AG04449 (cell line): ENCODE measurements at regions of chr1 and their contacts with region 1.

Region 1: GRCh38 chr1:67500413-67500959 is 70.3 kb upstream of the SERBP1 start:
- DNase-seq: no peak
- H3K4me3 ChIP-seq: no peak overlapping the region
- CTCF ChIP-seq: peak; percentile 99

Region 2: GRCh38 chr1:67227196-67227595 is 273.3 kb before region 1 on chr1:
- CTCF ChIA-PET with region 1: interaction called, 10 read pairs
- POLR2A ChIA-PET with region 1: no interaction called
- DNase-seq: no peak
- H3K4me3 ChIP-seq: no peak overlapping the region
- CTCF ChIP-seq: no peak

Region 3: DNA sequence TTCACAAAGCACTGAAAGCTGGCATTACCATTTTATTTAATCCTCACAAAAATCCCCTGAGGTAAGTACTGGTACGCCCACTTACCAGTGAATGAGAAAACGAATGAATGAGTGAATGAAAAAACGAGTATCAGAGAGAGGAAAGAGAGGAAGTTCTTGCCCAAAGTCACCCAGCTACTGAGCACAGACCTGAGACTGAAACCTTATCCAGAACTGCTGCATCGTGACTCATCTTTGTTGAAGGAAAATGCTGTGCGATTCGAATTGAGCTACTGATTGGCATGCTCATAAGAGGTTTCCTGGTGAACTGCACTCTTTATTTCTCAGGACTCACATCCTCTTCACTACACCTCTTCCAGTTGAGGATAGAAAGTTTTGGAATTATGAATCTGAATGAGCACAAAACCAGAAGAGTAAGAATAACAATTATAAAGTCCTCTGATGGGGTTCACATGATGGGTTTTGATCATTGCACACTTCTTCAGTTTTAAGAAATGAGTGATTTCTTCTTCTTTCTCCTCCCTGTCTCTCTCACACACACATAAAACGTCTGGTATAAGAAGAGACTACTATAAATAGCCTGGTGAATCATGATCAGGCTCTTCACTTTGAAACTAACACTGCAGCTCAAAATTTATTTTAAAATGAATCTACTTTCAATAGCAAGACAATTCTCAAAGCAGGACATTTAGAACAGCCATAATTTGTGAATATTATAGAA is 160.7 kb before region 1 on chr1:
- CTCF ChIA-PET with region 1: interaction called, 244 read pairs
- POLR2A ChIA-PET with region 1: interaction called, 3 read pairs
- DNase-seq: no peak
- H3K4me3 ChIP-seq: peak overlapping the region; percentile 18; the same call in 1 of the 2 replicates
- CTCF ChIP-seq: no peak

Region 4: DNA sequence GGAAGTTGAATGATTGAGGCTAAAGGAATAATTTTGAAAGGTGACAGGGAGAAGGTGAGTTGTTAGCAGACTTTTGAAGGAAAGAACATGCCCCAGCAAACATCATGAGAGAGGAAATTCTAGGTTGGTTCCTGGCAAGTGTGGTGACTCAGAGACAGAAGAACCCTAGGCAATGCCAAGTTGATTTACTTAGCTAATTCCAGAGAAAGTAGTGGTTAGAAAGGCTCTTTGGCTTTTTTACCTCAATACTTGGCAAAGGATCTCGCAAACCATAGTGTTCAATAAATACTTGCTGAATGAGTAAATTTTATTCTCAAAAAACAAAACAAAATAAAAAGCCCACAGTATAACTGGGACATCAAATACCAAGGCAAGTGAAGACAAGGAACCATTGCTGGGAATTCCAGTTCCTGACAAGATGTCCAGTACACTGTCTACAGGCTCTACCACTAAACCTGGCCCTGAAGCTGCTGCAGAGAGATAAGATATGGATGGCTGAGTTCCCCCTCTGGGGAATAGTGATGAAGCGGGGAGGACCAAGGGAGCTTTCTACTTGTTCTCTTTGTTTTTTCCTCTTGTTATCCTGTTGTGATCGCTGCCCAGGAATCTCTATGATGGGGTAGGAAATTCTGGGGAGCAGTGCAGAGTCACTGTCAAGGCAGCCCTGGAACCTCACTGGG is 144.6 kb before region 1 on chr1:
- CTCF ChIA-PET with region 1: interaction called, 244 read pairs
- POLR2A ChIA-PET with region 1: no interaction called
- DNase-seq: peak; percentile 82
- H3K4me3 ChIP-seq: no peak overlapping the region
- CTCF ChIP-seq: no peak

Region 5: GRCh38 chr1:67479146-67479891 is 21.2 kb before region 1 on chr1:
- CTCF ChIA-PET with region 1: interaction called, 12 read pairs
- POLR2A ChIA-PET with region 1: no interaction called
- DNase-seq: no peak
- H3K4me3 ChIP-seq: no peak overlapping the region
- CTCF ChIP-seq: no peak

Region 6: DNA sequence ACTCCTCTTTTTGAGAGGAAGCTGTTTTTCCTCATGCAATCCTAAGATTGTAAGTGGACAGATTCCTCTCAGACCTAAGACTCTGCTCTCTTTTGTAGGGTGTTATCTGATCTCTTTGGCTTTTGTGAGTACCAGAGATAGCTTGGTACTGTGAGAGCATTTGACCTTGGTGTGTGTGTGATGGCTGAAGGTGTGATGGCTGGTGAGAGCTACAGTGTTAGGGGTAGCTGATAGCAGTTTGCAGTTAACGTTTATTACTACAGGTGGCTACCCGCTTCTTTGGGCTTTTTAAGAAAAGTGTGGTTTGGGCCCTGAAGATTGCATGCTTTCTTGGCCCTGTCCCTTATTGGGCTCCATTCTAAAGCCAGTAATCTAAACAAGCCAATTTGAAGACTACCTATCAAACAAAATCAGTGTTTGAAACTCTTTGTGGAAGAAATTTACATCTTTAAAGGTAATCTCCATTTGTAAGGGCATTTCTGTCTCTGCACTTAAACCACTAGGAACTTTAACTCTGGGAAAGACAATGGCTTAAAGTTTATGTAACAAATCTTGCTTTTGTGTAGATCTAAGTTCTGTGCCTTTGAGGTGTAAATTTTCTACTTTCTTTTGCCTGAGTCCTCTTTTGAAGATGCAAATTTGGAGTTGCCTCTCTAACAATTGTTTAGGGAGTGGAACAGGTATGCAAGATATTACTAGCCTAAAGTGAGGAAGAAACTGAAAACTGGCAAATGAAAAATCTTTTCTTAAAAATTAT is 15.0 kb after region 1 on chr1:
- CTCF ChIA-PET with region 1: interaction called, 23 read pairs
- POLR2A ChIA-PET with region 1: no interaction called
- DNase-seq: no peak
- H3K4me3 ChIP-seq: no peak overlapping the region
- CTCF ChIP-seq: no peak